ENCODE measurements at regions of chr1 and their contacts with region 1.

Region 1: DNA sequence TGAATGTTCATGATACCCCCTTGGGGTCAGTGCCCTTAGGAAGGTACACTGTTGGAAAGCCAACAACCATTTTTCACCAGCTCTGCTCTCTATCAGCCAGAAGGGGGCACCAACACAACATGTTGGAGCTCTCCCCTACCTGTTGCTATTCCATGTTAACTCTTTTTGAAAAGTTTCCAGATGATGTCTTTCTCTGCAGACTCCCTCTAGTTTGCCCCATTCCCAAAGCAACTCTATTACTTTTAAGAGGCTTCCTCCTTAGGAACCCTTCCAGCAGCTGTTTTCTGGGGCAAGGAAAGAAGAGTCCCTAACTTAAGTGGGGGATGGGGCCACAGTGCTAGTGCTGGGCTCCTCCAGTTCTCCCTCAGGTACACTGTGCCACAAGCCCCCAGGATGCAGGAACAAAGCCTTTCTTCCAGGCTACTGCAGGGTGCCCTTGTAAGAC is 22.9 kb upstream of the NDC1 start:
- DNase-seq: peak in 8 of 9 experiments; percentile 15 to 75 (median 50)
- ATAC-seq: peak; percentile 83
- H3K4me3 ChIP-seq: no peak overlapping the region
- H3K4me3 Mint-ChIP-seq: no peak overlapping the region
- H3K27ac ChIP-seq: no peak overlapping the region
- H3K27ac Mint-ChIP-seq: no peak overlapping the region
- H3K4me1 ChIP-seq: no peaks in the 10 kb centered on the region
- H3K4me1 Mint-ChIP-seq: no peaks in the 10 kb centered on the region
- H3K27me3 ChIP-seq: no peaks in the 10 kb centered on the region
- H3K27me3 Mint-ChIP-seq: no peaks in the 10 kb centered on the region
- CTCF ChIP-seq: peak; percentile 79

Region 2: GRCh38 chr1:53249706-53250105 is 611.3 kb before region 1 on chr1:
- CTCF ChIA-PET with region 1: no interaction called
- POLR2A ChIA-PET with region 1: no interaction called
- intact Hi-C with region 1: no loop called
- DNase-seq: no peak
- ATAC-seq: no peak
- H3K4me3 ChIP-seq: no peak overlapping the region
- H3K4me3 Mint-ChIP-seq: no peak overlapping the region
- H3K27ac ChIP-seq: no peak overlapping the region
- H3K27ac Mint-ChIP-seq: no peak overlapping the region
- H3K4me1 ChIP-seq: no peaks in the 10 kb centered on the region
- H3K4me1 Mint-ChIP-seq: no peaks in the 10 kb centered on the region
- H3K27me3 ChIP-seq: no peaks in the 10 kb centered on the region
- H3K27me3 Mint-ChIP-seq: no peaks in the 10 kb centered on the region
- CTCF ChIP-seq: no peak

Region 3: DNA sequence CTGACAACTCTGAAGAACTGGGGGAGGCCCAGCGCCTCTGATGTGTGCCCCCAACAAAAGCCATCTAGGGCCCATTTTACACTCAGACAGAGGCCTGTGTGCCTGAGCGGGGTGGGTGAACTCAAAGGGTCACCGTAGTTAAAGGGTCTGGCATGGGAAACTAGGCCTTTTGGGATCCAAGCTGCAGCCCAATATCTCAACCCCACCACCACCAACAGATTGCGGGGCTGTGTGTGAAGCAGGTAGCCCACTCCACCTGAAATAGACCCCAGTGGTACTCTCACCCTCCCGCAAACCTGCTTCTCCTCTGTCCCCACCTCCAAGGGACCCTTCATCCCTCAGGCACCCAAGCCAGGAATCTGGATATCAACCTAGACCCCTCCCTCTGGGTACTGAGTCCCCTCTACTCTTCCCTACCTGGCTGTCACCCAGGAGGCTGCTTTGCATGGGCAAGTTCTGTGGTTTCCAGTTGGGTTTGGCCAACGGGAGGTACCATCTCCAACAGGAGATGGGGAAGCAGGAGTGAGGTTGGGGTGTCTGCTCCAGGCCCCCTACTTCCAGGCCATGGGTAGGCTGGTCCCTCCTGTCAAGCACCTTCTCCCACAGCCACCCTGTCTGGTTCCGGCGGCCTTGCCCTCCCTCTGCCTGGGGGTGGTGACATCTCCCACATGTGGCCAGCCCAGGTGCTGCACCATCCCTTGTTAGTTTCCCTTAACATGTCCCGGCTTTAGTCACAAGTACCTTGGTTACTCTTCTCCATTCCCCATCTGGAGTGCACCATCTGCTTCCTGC is 497.9 kb before region 1 on chr1:
- CTCF ChIA-PET with region 1: no interaction called
- POLR2A ChIA-PET with region 1: no interaction called
- intact Hi-C with region 1: no loop called
- DNase-seq: peak in 1 of 9 experiments; percentile 46
- ATAC-seq: no peak
- H3K4me3 ChIP-seq: no peak overlapping the region
- H3K4me3 Mint-ChIP-seq: no peak overlapping the region
- H3K27ac ChIP-seq: no peak overlapping the region
- H3K27ac Mint-ChIP-seq: no peak overlapping the region
- H3K4me1 ChIP-seq: peaks cover 11% of the 10 kb centered on the region
- H3K4me1 Mint-ChIP-seq: peaks cover 16% of the 10 kb centered on the region
- H3K27me3 ChIP-seq: no peaks in the 10 kb centered on the region
- H3K27me3 Mint-ChIP-seq: no peaks in the 10 kb centered on the region
- CTCF ChIP-seq: no peak

Region 4: GRCh38 chr1:53697721-53698383 is 163.1 kb before region 1 on chr1:
- CTCF ChIA-PET with region 1: no interaction called
- POLR2A ChIA-PET with region 1: no interaction called
- intact Hi-C with region 1: no loop called
- DNase-seq: no peak
- ATAC-seq: no peak
- H3K4me3 ChIP-seq: no peak overlapping the region
- H3K4me3 Mint-ChIP-seq: no peak overlapping the region
- H3K27ac ChIP-seq: no peak overlapping the region
- H3K27ac Mint-ChIP-seq: no peak overlapping the region
- H3K4me1 ChIP-seq: no peaks in the 10 kb centered on the region
- H3K4me1 Mint-ChIP-seq: no peaks in the 10 kb centered on the region
- H3K27me3 ChIP-seq: no peaks in the 10 kb centered on the region
- H3K27me3 Mint-ChIP-seq: peaks cover 7% of the 10 kb centered on the region
- CTCF ChIP-seq: no peak

Region 5: DNA sequence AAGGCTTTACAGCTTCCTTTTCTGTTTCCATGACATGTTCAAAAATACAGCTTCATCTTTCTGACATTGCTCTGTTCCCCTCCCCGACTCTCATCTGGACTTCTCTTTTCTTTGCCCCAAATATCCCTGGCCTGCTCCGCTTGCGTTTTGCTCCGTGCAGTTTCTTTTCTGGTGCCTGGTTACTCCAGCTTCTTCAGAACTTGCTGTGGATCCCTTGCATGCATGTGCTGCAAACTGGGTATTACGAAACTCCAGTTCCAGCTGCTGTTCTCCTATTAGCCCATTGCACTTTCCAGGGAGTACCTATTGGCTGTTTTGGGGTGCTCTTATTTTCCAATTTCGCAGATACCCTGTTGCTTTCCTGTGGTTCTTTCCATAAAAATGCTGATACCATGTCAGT is 13.0 kb before region 1 on chr1:
- CTCF ChIA-PET with region 1: interaction called, 12 read pairs
- POLR2A ChIA-PET with region 1: no interaction called
- intact Hi-C with region 1: no loop called
- DNase-seq: no peak
- ATAC-seq: no peak
- H3K4me3 ChIP-seq: no peak overlapping the region
- H3K4me3 Mint-ChIP-seq: no peak overlapping the region
- H3K27ac ChIP-seq: no peak overlapping the region
- H3K27ac Mint-ChIP-seq: no peak overlapping the region
- H3K4me1 ChIP-seq: no peaks in the 10 kb centered on the region
- H3K4me1 Mint-ChIP-seq: no peaks in the 10 kb centered on the region
- H3K27me3 ChIP-seq: no peaks in the 10 kb centered on the region
- H3K27me3 Mint-ChIP-seq: no peaks in the 10 kb centered on the region
- CTCF ChIP-seq: no peak

Region 6: DNA sequence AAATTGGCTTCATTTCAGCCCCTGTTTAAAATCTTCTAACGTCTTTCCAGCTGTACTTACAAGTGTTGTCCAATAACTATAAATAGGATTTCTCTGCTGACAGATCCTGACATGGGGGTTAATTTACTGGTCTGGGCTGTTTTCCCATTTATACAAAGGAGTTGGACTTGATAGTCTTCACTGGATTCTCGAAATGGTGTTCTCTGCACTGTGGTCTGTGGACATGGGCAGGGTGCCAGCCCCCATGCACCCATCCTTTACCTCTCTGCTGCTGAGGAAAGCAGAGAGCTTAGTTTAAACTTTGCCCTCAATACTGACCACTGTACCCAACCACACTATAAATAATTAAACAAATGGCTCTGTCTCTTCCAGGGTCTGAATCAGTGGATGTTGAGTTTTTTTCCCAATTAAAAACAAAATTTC is 38.2 kb after region 1 on chr1:
- CTCF ChIA-PET with region 1: interaction called, 16 read pairs
- POLR2A ChIA-PET with region 1: no interaction called
- intact Hi-C with region 1: no loop called
- DNase-seq: no peak
- ATAC-seq: no peak
- H3K4me3 ChIP-seq: no peak overlapping the region
- H3K4me3 Mint-ChIP-seq: no peak overlapping the region
- H3K27ac ChIP-seq: no peak overlapping the region
- H3K27ac Mint-ChIP-seq: no peak overlapping the region
- H3K4me1 ChIP-seq: no peaks in the 10 kb centered on the region
- H3K4me1 Mint-ChIP-seq: no peaks in the 10 kb centered on the region
- H3K27me3 ChIP-seq: no peaks in the 10 kb centered on the region
- H3K27me3 Mint-ChIP-seq: peaks cover 6% of the 10 kb centered on the region
- CTCF ChIP-seq: no peak

Region 7: DNA sequence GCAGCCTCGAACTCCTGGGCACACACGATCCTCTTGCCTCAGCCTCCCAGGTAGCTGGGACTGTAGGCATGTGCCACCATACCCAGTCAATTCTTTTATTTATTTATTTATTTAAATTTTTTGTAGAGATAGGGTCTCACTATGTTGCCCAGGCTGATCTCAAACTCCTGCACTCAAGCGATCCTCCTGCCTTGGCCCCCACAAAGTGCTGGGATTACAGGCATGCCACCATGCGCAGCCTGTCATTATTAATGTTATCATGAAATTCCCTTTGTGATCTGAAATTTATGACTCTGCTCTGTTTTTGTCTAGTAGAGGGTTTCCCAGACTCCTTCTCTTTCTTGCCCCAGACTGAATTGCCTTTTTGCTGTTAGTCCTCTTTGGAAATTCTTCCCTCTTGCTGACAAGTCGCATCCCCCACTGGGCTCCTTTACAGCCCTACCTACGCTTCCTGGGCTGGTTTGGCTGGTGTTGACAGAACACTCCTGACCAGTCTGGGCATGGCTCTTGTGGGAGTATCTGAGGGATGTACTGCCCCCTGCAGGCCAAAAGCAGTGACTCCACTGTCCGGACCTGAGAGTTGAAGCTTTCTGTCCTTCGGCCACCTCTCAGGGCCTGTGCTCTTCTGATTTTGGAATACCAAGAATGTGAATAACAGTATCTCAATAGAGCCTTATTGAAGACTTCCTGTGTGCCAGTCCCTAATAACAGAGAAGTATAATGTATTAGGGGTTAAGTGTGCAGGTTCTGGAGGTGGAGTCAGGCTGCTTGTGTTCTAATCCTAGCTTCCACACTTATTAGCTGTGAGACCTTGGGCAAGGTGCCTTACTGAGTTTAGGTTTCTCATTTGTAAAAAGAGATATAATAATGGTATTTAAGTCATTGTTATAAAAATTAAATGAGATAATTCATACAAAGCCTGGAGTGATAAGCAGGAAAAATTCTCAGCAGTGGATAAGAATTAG is 220.6 kb after region 1 on chr1:
- CTCF ChIA-PET with region 1: interaction called, 6 read pairs
- POLR2A ChIA-PET with region 1: no interaction called
- intact Hi-C with region 1: loop called (anchors 5 kb)
- DNase-seq: peak; percentile 18 to 72 (median 60)
- ATAC-seq: peak; percentile 84
- H3K4me3 ChIP-seq: no peak overlapping the region
- H3K4me3 Mint-ChIP-seq: no peak overlapping the region
- H3K27ac ChIP-seq: no peak overlapping the region
- H3K27ac Mint-ChIP-seq: no peak overlapping the region
- H3K4me1 ChIP-seq: no peaks in the 10 kb centered on the region
- H3K4me1 Mint-ChIP-seq: peaks cover 3% of the 10 kb centered on the region
- H3K27me3 ChIP-seq: no peaks in the 10 kb centered on the region
- H3K27me3 Mint-ChIP-seq: no peaks in the 10 kb centered on the region
- CTCF ChIP-seq: peak; percentile 81